ENCODE measurements at regions of chr12 and their contacts with region 1.

Region 1: GRCh38 chr12:42129595-42130204 is 15.0 kb downstream of the GXYLT1 start:
- DNase-seq: peak; percentile 80
- ATAC-seq: peak; percentile 82
- H3K4me3 ChIP-seq: no peak overlapping the region
- H3K27ac ChIP-seq: no peak overlapping the region
- H3K4me1 ChIP-seq: peaks cover 5% of the 10 kb centered on the region
- H3K27me3 ChIP-seq: no peaks in the 10 kb centered on the region
- CTCF ChIP-seq: peak; percentile 93
- POLR2A ChIP-seq: no peak
- RAD21 ChIP-seq: peak; percentile 96

Region 2: GRCh38 chr12:41932470-41932991 is 197.2 kb before region 1 on chr12:
- CTCF ChIA-PET with region 1: interaction called, 11 read pairs
- POLR2A ChIA-PET with region 1: no interaction called
- dilution Hi-C with region 1: no loop called
- in situ Hi-C with region 1: no loop called
- intact Hi-C with region 1: no loop called
- DNase-seq: no peak
- ATAC-seq: peak; percentile 44
- H3K4me3 ChIP-seq: peak overlapping the region; percentile 25
- H3K27ac ChIP-seq: no peak overlapping the region
- H3K4me1 ChIP-seq: no peaks in the 10 kb centered on the region
- H3K27me3 ChIP-seq: no peaks in the 10 kb centered on the region; the same call in 1 of the 2 replicates
- CTCF ChIP-seq: no peak
- POLR2A ChIP-seq: no peak
- RAD21 ChIP-seq: no peak

Region 3: GRCh38 chr12:42325653-42326474 is 196.2 kb after region 1 on chr12 and contains the starts of genes PPHLN1 and ZCRB1:
- CTCF ChIA-PET with region 1: no interaction called
- POLR2A ChIA-PET with region 1: no interaction called
- dilution Hi-C with region 1: no loop called
- in situ Hi-C with region 1: loop called (anchors 5 kb)
- intact Hi-C with region 1: no loop called
- DNase-seq: peak; percentile 71
- ATAC-seq: peak; percentile 97
- H3K4me3 ChIP-seq: peak within 1 kb of the TSS; percentile 97
- H3K27ac ChIP-seq: peak within 1 kb of the TSS; percentile 85
- H3K4me1 ChIP-seq: peaks cover 2% of the 10 kb centered on the region; the same call in 1 of the 2 replicates
- H3K27me3 ChIP-seq: no peaks in the 10 kb centered on the region
- CTCF ChIP-seq: no peak
- POLR2A ChIP-seq: peak; percentile 85
- RAD21 ChIP-seq: no peak
- total RNA-seq, gene PPHLN1: 50.7 and 96.9 TPM in 2 replicates
- total RNA-seq, gene ZCRB1: 28.1 and 33.1 TPM in 2 replicates

Region 4: DNA sequence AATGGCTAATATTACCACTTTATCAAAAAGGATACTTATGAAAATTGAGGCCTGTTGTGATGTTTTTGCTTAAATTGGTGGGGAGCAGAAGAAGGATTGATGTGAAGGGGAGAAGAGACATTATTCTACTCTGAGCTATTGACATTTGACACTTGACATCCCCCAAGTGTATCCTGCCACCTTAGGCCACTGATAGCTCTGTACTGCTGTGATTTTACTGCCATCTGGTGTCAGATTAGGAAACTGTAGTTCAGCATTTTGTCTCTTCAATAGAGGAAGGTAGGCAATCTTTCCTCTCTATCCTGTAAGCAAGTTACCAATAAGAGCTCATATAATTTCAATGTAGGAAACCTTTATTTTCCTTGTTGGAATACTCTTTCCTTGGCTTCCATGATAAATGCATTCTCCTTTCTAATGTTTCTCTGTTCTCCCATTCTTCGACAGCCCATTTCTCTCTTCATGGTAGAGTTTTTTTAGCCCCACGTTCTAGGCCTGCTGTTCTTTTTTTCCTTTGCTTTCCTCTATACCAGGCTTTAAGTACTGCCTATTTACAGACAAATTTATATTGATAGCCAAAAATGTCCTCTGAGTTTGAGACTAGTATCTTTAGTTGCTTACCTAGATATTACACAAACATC is 242.6 kb after region 1 on chr12:
- CTCF ChIA-PET with region 1: interaction called, 4 read pairs
- POLR2A ChIA-PET with region 1: no interaction called
- dilution Hi-C with region 1: no loop called
- in situ Hi-C with region 1: no loop called
- intact Hi-C with region 1: loop called (anchors 1 kb)
- DNase-seq: peak; percentile 46
- ATAC-seq: peak; percentile 77
- H3K4me3 ChIP-seq: no peak overlapping the region
- H3K27ac ChIP-seq: no peak overlapping the region
- H3K4me1 ChIP-seq: no peaks in the 10 kb centered on the region
- H3K27me3 ChIP-seq: no peaks in the 10 kb centered on the region
- CTCF ChIP-seq: peak; percentile 73
- POLR2A ChIP-seq: no peak
- RAD21 ChIP-seq: peak; percentile 84

Region 5: DNA sequence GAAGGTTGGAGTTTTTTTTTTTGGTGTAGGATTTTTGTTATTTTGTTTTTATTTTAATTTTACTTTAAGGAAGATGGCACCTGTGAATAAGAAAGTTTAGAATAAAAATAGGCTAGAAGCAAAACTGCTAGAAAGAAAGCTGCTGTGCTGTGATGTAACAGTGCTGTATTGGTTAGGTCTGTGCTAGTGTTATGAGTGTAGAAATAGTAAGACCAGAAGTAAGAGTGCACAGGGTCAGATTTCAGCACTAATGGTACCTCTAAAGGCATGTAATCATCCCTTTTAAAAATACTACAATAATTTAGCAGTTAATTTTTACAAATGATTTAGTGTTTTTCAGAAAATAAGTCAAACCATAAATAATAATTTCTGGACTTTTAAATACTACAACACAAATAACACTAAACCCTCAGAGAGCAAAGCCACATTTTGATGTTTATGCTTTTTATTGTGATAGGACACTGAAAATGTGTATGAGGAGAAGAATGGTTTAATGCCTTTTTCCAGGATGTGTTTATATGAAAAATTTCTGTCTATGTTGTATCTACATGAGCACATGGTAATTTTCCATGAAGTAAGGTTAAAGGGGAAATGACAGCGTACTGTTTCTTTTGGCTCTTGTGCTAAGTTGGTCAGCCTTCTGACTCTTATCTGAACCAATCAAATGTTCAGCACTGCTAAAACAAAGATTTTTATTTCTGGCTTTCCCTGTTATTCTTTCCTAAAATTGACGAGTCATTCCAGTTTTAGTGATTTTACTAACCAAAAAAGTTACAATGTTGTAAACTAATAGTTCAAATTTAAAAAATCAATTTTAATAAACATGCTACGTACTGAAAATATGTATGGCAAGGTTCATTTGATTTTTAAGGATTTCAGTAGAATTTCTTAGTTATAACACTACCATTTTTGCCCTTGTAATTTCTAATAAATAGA is 292.4 kb after region 1 on chr12:
- CTCF ChIA-PET with region 1: no interaction called
- POLR2A ChIA-PET with region 1: no interaction called
- dilution Hi-C with region 1: no loop called
- in situ Hi-C with region 1: no loop called
- intact Hi-C with region 1: no loop called
- DNase-seq: peak; percentile 90
- ATAC-seq: peak; percentile 91
- H3K4me3 ChIP-seq: no peak overlapping the region
- H3K27ac ChIP-seq: no peak overlapping the region; the same call in 1 of the 2 replicates
- H3K4me1 ChIP-seq: peaks cover 4% of the 10 kb centered on the region
- H3K27me3 ChIP-seq: no peaks in the 10 kb centered on the region
- CTCF ChIP-seq: no peak
- POLR2A ChIP-seq: no peak
- RAD21 ChIP-seq: no peak

Region 6: DNA sequence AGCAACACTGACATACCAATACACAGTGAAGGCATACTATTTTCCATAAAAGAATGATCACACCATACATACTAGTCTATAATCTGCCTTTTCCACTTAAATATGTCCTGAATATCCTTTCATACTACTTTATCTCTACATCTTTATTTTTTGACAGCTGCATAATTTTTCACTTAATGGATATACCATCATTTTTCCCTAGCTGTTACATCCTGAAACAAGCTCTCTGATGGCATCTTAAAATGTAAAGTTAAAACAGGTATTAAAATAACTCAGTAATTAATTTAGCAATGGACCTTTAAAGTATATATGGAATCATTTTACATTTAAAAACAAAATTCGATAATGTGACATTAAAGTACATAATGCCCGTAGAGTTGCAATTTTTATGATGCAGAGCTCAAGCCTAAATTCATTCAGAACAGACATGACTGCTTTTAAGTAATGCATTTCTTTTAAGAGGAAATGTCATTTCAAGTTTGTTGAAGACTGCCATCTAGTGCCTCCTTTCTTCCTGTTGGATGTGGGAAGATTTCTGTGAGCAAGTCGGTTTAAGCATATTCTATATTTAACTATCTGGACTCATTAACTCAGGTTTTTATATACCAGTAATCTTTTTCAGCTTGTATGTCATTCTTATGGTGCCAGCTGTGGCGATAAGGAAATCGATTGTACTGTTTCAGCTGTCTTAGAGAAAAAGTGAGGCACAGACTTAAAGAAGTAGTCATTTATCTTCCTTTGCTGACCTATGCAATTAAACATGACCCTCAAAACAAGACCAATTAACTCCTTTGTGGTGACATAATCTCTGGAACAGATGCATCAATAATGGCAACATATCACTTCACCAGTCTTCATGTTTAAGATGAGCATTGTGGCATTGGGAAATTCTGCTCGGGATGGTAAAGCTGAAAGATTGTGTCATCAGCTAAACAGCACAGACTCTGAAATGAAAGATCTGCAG is 439.5 kb after region 1 on chr12:
- CTCF ChIA-PET with region 1: interaction called, 3 read pairs
- POLR2A ChIA-PET with region 1: no interaction called
- dilution Hi-C with region 1: no loop called
- in situ Hi-C with region 1: loop called (anchors 10 kb)
- intact Hi-C with region 1: loop called (anchors 2 kb)
- DNase-seq: peak; percentile 80
- ATAC-seq: peak; percentile 25; the same call in 1 of the 2 replicates
- H3K4me3 ChIP-seq: no peak overlapping the region
- H3K27ac ChIP-seq: no peak overlapping the region
- H3K4me1 ChIP-seq: peaks cover 20% of the 10 kb centered on the region
- H3K27me3 ChIP-seq: no peaks in the 10 kb centered on the region
- CTCF ChIP-seq: peak; percentile 69
- POLR2A ChIP-seq: no peak
- RAD21 ChIP-seq: peak; percentile 60